GM12878 (cell line): ENCODE measurements at regions of chr17 and their contacts with region 1.

Region 1: GRCh38 chr17:73371285-73371684 is 59.5 kb upstream of the CDC42EP4 start:
- DNase-seq: no peak
- ATAC-seq: no peak
- H3K4me3 ChIP-seq: no peak overlapping the region
- H3K27ac ChIP-seq: no peak overlapping the region
- H3K4me1 ChIP-seq: no peaks in the 10 kb centered on the region
- H3K27me3 ChIP-seq: peaks cover 0 to 4% of the 10 kb centered on the region in 2 experiments
- CTCF ChIP-seq: no peak
- EP300 ChIP-seq: no peak
- POLR2A ChIP-seq: no peak
- RAD21 ChIP-seq: no peak

Region 2: GRCh38 chr17:73192894-73193701 is 178.2 kb before region 1 on chr17 and contains the start of gene COG1:
- CTCF ChIA-PET with region 1: interaction called, 36 read pairs
- POLR2A ChIA-PET with region 1: interaction called, 3 read pairs
- RAD21 ChIA-PET with region 1: interaction called, 29 read pairs
- SMC1A ChIA-PET with region 1: interaction called, 16 read pairs
- in situ Hi-C with region 1: no loop called
- intact Hi-C with region 1: loop called (anchors 2 kb)
- DNase-seq: no peak
- ATAC-seq: peak; percentile 85
- H3K4me3 ChIP-seq: peak within 1 kb of the TSS; percentile 76
- H3K27ac ChIP-seq: peak within 1 kb of the TSS; percentile 86
- H3K4me1 ChIP-seq: no peaks in the 10 kb centered on the region
- H3K27me3 ChIP-seq: no peaks in the 10 kb centered on the region
- CTCF ChIP-seq: no peak
- EP300 ChIP-seq: no peak
- POLR2A ChIP-seq: peak; percentile 80
- RAD21 ChIP-seq: no peak
- polyA plus RNA-seq, gene COG1: 10.5 to 11.4 TPM

Region 3: GRCh38 chr17:73247726-73248125 is 123.6 kb before region 1 on chr17:
- CTCF ChIA-PET with region 1: interaction called, 365 read pairs
- POLR2A ChIA-PET with region 1: interaction called, 5 read pairs
- RAD21 ChIA-PET with region 1: interaction called, 218 read pairs
- SMC1A ChIA-PET with region 1: interaction called, 261 read pairs
- in situ Hi-C with region 1: loop called (anchors 5 kb)
- intact Hi-C with region 1: no loop called
- DNase-seq: no peak
- ATAC-seq: no peak
- H3K4me3 ChIP-seq: no peak overlapping the region
- H3K27ac ChIP-seq: no peak overlapping the region
- H3K4me1 ChIP-seq: no peaks in the 10 kb centered on the region
- H3K27me3 ChIP-seq: no peaks in the 10 kb centered on the region
- CTCF ChIP-seq: peak in 1 of 3 experiments; percentile 32; a peak in 1 of 6 replicates
- EP300 ChIP-seq: no peak
- POLR2A ChIP-seq: no peak
- RAD21 ChIP-seq: no peak

Region 4: DNA sequence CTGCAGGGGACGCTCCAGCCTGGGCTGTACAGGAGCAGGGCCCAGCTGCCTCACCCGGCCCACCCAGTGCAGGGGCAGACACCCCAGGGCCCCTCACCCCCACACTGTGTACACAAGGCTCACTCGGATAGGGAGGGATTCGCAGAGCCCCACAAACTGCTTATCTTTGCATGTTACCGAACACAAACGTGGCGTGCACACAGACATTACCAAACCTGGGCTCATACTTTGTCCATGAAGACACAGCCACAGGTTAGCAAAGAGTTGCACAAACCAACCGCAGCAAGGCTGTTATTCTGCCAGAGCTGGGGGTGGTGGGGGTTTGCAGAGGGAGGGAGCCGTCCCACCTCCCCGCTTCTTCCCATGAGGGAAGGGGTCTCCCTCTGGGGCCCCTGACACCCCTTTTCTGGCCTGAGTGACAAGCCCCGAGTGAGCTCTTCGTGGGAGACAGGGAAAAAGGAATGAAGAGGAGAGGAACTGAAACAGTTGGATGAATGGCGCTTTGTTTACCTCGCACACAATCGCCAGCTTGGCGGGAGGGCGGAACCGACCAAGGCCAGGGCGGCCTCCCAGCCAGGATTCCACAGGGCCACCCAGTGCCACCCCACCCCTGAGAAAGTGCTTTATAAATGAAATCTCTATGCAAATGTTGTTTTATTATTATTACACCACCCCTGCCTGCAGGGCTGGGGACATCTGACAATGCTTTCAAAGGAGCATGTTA is 109.2 kb before region 1 on chr17:
- CTCF ChIA-PET with region 1: interaction called, 365 read pairs
- POLR2A ChIA-PET with region 1: no interaction called
- RAD21 ChIA-PET with region 1: interaction called, 218 read pairs
- SMC1A ChIA-PET with region 1: interaction called, 261 read pairs
- in situ Hi-C with region 1: no loop called
- intact Hi-C with region 1: no loop called
- DNase-seq: no peak
- ATAC-seq: no peak; the same call in 2 of the 3 replicates
- H3K4me3 ChIP-seq: no peak overlapping the region
- H3K27ac ChIP-seq: no peak overlapping the region
- H3K4me1 ChIP-seq: no peaks in the 10 kb centered on the region
- H3K27me3 ChIP-seq: no peaks in the 10 kb centered on the region
- CTCF ChIP-seq: no peak
- EP300 ChIP-seq: no peak
- POLR2A ChIP-seq: no peak
- RAD21 ChIP-seq: no peak

Region 5: GRCh38 chr17:73278465-73279453 is 92.5 kb before region 1 on chr17:
- CTCF ChIA-PET with region 1: interaction called, 4 read pairs
- POLR2A ChIA-PET with region 1: no interaction called
- RAD21 ChIA-PET with region 1: interaction called, 12 read pairs
- SMC1A ChIA-PET with region 1: interaction called, 5 read pairs
- in situ Hi-C with region 1: no loop called
- intact Hi-C with region 1: no loop called
- DNase-seq: no peak
- ATAC-seq: no peak
- H3K4me3 ChIP-seq: no peak overlapping the region
- H3K27ac ChIP-seq: no peak overlapping the region
- H3K4me1 ChIP-seq: peaks cover 14% of the 10 kb centered on the region
- H3K27me3 ChIP-seq: no peaks in the 10 kb centered on the region
- CTCF ChIP-seq: no peak
- EP300 ChIP-seq: no peak
- POLR2A ChIP-seq: no peak
- RAD21 ChIP-seq: no peak

Region 6: GRCh38 chr17:73316919-73317505 is 54.3 kb before region 1 on chr17:
- CTCF ChIA-PET with region 1: interaction called, 15 read pairs
- POLR2A ChIA-PET with region 1: interaction called, 4 read pairs
- RAD21 ChIA-PET with region 1: interaction called, 24 read pairs
- SMC1A ChIA-PET with region 1: interaction called, 5 read pairs
- in situ Hi-C with region 1: no loop called
- intact Hi-C with region 1: loop called (anchors 5 kb)
- DNase-seq: peak; percentile 70
- ATAC-seq: peak; percentile 85
- H3K4me3 ChIP-seq: no peak overlapping the region
- H3K27ac ChIP-seq: no peak overlapping the region; the same call in 1 of the 2 replicates
- H3K4me1 ChIP-seq: peaks cover 12% of the 10 kb centered on the region
- H3K27me3 ChIP-seq: no peaks in the 10 kb centered on the region
- CTCF ChIP-seq: no peak
- EP300 ChIP-seq: no peak
- POLR2A ChIP-seq: no peak
- RAD21 ChIP-seq: no peak

Region 7: DNA sequence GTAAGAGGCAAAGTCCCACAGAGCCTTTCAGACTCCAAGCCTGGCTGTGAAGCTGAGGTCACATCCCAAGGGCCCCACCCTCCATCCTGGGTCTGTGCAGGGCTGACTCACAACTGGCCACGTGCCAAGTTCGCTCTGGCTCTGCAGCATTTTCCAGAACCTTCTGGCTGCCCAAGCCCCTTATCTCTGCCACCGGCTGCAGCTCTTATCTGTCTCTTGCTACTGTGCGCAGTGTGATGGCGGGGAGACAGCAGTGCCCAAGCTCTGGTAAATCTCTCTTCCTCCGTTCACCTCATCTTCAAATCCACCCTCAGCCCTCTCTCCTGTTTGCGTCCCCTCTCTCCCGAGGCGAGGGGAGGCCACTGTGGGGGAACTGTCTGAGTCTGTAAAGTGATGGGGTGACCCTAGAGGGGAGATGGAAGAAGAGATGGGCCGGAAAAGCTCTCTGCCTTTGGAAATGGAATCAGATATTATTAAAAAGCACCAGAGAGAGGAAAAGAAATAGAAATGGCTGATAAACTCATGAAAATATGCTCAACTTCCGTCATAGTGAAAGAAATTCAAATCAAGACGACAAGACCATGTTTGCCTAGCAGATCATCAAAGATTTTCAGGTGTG is 103.2 kb after region 1 on chr17:
- CTCF ChIA-PET with region 1: no interaction called
- POLR2A ChIA-PET with region 1: no interaction called
- RAD21 ChIA-PET with region 1: no interaction called
- SMC1A ChIA-PET with region 1: no interaction called
- in situ Hi-C with region 1: no loop called
- intact Hi-C with region 1: no loop called
- DNase-seq: no peak
- ATAC-seq: no peak
- H3K4me3 ChIP-seq: no peak overlapping the region
- H3K27ac ChIP-seq: no peak overlapping the region
- H3K4me1 ChIP-seq: no peaks in the 10 kb centered on the region
- H3K27me3 ChIP-seq: peaks cover 0 to 2% of the 10 kb centered on the region in 2 experiments; a peak in 2 of 4 replicates
- CTCF ChIP-seq: no peak
- EP300 ChIP-seq: no peak
- POLR2A ChIP-seq: no peak
- RAD21 ChIP-seq: no peak

Region 8: DNA sequence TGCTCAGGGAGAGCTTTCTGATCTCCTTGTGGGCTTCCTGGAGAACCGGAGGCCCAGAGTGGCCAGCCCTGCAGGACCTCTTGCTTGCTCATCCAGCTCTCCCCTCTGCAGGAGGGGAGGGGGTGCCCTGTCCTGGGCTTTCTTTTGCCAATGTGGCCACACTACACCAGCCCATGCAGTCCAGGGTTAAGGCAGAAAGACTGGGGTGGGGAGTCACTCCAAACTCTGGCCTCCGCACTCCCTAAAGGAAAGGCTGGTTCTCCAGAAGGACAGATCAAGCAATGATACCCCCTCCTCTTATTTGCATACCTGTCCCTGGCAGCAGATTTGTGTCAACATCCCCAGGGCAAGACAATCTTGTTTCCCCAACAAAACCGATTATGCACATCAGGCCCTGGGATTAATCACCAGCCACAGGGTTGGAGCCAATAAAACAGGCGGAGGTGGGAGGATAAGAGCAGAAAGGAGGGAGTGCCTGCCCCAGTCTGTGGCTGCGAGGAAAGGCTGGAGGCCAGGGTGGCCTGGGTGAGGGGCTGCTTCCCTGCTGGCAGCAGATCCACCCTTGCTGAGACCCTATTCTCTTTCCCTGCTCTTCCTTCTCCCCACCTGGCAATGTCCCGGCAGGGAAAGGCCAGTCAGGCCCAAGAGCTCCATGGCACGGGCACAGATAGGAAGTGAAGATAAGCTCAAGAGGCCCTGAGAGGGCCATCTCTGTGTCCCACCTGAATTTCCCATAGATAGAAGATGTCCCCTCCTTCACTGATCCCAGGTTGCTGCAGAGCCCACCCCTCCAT is 135.2 kb after region 1 on chr17:
- CTCF ChIA-PET with region 1: no interaction called
- POLR2A ChIA-PET with region 1: no interaction called
- RAD21 ChIA-PET with region 1: no interaction called
- SMC1A ChIA-PET with region 1: no interaction called
- in situ Hi-C with region 1: no loop called
- intact Hi-C with region 1: no loop called
- DNase-seq: no peak
- ATAC-seq: no peak
- H3K4me3 ChIP-seq: no peak overlapping the region
- H3K27ac ChIP-seq: no peak overlapping the region
- H3K4me1 ChIP-seq: no peaks in the 10 kb centered on the region
- H3K27me3 ChIP-seq: no peaks in the 10 kb centered on the region; a peak in 1 of 4 replicates
- CTCF ChIP-seq: no peak
- EP300 ChIP-seq: no peak
- POLR2A ChIP-seq: no peak
- RAD21 ChIP-seq: no peak